Endothelial cell of umbilical vein (primary cell): ENCODE measurements at regions of chr4 and their contacts with region 1.

Region 1: DNA sequence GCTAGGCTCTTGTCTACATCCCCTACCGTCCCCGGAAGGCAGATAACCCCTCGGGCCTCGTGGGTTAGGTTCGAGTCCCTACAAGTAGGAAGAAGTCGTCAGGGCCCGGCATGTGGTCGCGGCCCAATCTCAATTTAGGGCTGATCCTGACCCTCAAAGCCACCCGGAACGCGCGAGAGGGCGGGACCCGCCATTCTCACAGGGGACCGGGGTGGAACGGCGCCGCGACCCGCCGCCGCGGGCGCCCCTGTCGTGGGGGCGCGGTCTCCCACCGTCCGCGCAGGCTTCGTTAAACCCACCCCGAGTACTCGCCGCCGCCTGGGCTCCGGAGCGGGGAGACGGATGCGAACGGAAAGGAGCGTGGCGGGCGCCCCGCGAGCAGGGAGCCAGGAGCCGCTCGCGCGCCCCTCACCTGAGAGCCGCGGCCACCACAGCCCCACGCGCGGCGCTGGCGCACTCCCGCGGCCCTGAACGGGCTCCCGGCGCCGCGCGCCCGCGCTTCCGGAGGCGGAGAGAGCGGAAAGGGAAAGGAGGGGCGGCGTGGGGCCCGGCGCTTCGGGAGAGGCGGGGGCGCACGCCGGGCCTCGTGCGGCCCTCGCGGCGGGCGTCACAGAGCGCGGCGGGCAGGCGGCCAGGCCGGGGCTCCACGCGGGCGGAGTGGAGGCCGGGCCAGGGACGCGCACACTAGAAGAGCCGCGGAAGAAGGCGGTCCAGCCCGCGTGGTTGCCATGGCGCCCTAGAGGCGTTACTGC is at the start of gene CFAP97:
- DNase-seq: peak; percentile 90
- H3K4me3 ChIP-seq: peak within 1 kb of the TSS; percentile 60 to 89 (median 64)
- H3K27ac ChIP-seq: peak within 1 kb of the TSS; percentile 79
- H3K4me1 ChIP-seq: peaks cover 34% of the 10 kb centered on the region
- H3K27me3 ChIP-seq: no peaks in the 10 kb centered on the region
- CTCF ChIP-seq: no peak
- POLR2A ChIP-seq: peak; percentile 43
- total RNA-seq, gene CFAP97: 17.6 and 22.4 TPM in 2 replicates

Region 2: DNA sequence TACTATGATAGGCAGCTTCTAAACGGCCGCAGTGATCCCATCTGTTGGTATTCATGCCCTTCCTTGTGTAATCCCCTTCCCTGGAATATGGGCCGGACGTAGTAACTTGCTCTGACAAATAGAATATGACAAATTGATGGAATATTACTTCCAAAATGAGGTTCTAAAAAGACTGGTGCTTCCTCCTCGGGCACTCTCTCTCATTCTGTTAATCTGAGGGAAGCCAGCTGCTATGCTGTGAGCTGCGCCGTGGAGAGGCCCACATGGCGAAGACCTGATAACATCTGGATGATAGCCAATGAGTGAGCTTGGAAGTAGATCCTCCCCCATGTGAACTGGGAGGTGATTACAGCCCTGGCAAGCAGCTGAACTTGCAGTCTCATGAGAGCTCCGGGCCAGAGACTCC is 87.8 kb before region 1 on chr4:
- CTCF ChIA-PET with region 1: no interaction called
- POLR2A ChIA-PET with region 1: no interaction called
- dilution Hi-C with region 1: no loop called
- intact Hi-C with region 1: no loop called
- DNase-seq: peak; percentile 51
- H3K4me3 ChIP-seq: no peak overlapping the region
- H3K27ac ChIP-seq: no peak overlapping the region
- H3K4me1 ChIP-seq: peaks cover 9% of the 10 kb centered on the region
- H3K27me3 ChIP-seq: no peaks in the 10 kb centered on the region
- CTCF ChIP-seq: no peak
- POLR2A ChIP-seq: no peak

Region 3: GRCh38 chr4:185142912-185143595 is 60.6 kb before region 1 on chr4 and contains the start of gene SLC25A4:
- CTCF ChIA-PET with region 1: no interaction called
- POLR2A ChIA-PET with region 1: no interaction called
- dilution Hi-C with region 1: no loop called
- intact Hi-C with region 1: loop called (anchors 5 kb)
- DNase-seq: peak; percentile 77
- H3K4me3 ChIP-seq: peak within 1 kb of the TSS; percentile 52 to 75 (median 69)
- H3K27ac ChIP-seq: no peak within 1 kb of the TSS
- H3K4me1 ChIP-seq: peaks cover 12% of the 10 kb centered on the region
- H3K27me3 ChIP-seq: no peaks in the 10 kb centered on the region
- CTCF ChIP-seq: peak; percentile 43 to 62
- POLR2A ChIP-seq: peak; percentile 93
- total RNA-seq, gene SLC25A4: 13.7 and 13.9 TPM in 2 replicates

Region 4: GRCh38 chr4:185343726-185344581 is 140.3 kb after region 1 on chr4:
- CTCF ChIA-PET with region 1: no interaction called
- POLR2A ChIA-PET with region 1: no interaction called
- dilution Hi-C with region 1: no loop called
- intact Hi-C with region 1: no loop called
- DNase-seq: peak; percentile 57
- H3K4me3 ChIP-seq: no peak overlapping the region
- H3K27ac ChIP-seq: peak overlapping the region; percentile 62
- H3K4me1 ChIP-seq: peaks cover 19% of the 10 kb centered on the region
- H3K27me3 ChIP-seq: no peaks in the 10 kb centered on the region
- CTCF ChIP-seq: no peak
- POLR2A ChIP-seq: no peak

Region 5: DNA sequence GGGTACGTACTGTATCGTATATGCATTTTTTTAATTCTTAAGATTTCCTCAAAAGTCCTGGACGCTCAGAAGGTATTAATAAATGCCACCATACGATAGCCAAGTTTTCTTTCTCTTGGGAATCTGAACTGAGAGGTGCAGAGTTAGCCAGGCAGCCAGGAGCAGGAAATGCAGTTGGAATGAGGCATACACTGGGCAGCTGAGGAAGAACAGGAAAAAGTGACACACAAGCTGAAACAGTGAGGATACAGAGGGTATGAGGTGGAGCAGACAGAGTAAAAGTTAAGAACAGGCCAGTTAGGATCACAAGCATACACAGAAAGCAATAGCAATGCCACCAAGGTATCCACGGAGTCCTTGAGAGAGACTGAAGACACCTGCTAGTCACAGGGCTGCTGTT is 208.8 kb after region 1 on chr4:
- CTCF ChIA-PET with region 1: no interaction called
- POLR2A ChIA-PET with region 1: no interaction called
- dilution Hi-C with region 1: no loop called
- intact Hi-C with region 1: loop called (anchors 5 kb)
- DNase-seq: peak; percentile 88
- H3K4me3 ChIP-seq: no peak overlapping the region
- H3K27ac ChIP-seq: peak overlapping the region; percentile 87
- H3K4me1 ChIP-seq: peaks cover 21% of the 10 kb centered on the region
- H3K27me3 ChIP-seq: no peaks in the 10 kb centered on the region
- CTCF ChIP-seq: no peak
- POLR2A ChIP-seq: no peak

Region 6: DNA sequence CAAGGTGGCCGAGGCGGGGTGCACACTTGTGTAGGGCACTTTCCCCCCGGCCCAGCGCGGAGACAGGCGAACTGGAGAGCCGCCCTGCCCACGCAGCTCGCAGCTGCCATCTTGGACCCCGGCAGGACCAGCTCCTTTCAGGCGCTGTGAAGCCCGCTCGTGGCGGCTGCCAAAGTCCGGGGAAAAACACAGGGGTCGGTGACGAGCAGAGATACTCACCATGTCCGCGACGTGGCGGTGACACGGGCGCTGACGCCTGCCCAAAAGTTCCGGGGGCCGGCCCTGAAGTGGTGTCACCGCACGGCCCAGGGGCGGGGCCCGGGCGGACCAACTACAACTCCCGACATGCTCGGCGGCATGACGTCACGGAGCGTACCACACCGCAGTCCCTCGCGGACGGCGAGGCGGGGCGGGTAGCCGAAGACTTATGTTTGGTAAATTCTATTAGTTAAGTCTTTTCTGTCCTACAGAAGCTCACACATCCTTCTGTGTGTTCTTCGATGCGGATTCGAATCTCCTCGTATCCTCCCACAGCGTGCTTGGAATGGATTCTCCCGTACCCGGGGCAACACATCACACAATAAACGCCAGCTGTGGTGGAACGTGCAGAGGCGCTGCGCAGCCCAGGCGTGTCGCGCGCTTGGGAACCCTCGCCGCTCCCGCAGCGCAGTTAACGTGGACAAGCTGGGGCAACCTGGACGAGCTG is 222.1 kb after region 1 on chr4 and contains the start of gene UFSP2:
- CTCF ChIA-PET with region 1: interaction called, 3 read pairs
- POLR2A ChIA-PET with region 1: no interaction called
- dilution Hi-C with region 1: no loop called
- intact Hi-C with region 1: loop called (anchors 2 kb)
- DNase-seq: peak; percentile 93
- H3K4me3 ChIP-seq: peak within 1 kb of the TSS; percentile 59 to 90 (median 69)
- H3K27ac ChIP-seq: peak within 1 kb of the TSS; percentile 96
- H3K4me1 ChIP-seq: peaks cover 8% of the 10 kb centered on the region
- H3K27me3 ChIP-seq: no peaks in the 10 kb centered on the region
- CTCF ChIP-seq: no peak
- POLR2A ChIP-seq: no peak
- total RNA-seq, gene UFSP2: 25.2 and 26.7 TPM in 2 replicates

Region 7: DNA sequence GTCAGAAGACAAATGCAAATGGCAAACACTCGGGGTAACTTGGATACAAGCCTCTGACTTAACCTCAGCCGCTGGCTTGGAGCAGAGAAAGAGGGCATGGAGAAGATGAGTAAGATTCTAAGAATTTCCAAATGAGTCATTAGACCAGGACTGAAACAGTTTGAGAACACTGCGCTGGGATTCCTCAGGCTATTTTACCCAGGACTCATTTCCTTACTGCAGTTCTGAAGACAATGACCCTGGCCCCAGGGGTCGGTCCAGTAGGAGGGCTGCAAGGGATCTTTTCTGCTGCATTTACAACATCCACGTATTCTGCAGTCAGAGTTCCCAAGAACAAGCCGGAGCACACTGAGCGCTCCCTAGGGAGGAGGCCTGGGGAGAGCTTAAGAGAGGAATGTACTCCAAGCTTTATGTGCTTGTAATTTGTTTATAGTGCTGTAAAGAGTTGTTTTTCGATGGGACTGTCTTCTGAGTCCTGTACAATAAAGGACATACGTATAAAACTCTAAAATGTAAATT is 635.6 kb after region 1 on chr4:
- CTCF ChIA-PET with region 1: no interaction called
- POLR2A ChIA-PET with region 1: no interaction called
- dilution Hi-C with region 1: no loop called
- intact Hi-C with region 1: loop called (anchors 10 kb)
- DNase-seq: peak; percentile 95
- H3K4me3 ChIP-seq: no peak overlapping the region
- H3K27ac ChIP-seq: peak overlapping the region; percentile 77
- H3K4me1 ChIP-seq: peaks cover 36% of the 10 kb centered on the region
- H3K27me3 ChIP-seq: no peaks in the 10 kb centered on the region
- CTCF ChIP-seq: no peak
- POLR2A ChIP-seq: no peak